ENCODE measurements at regions of chr5 and their contacts with region 1.

Region 1: GRCh38 chr5:68884883-68885282 is 208.9 kb upstream of the SLC30A5 start:
- DNase-seq: peak in 1 of 2 experiments; percentile 11
- H3K4me3 ChIP-seq: no peak overlapping the region
- H3K4me3 Mint-ChIP-seq: no peak overlapping the region
- H3K27ac Mint-ChIP-seq: no peak overlapping the region
- H3K4me1 ChIP-seq: no peaks in the 10 kb centered on the region
- H3K4me1 Mint-ChIP-seq: no peaks in the 10 kb centered on the region
- H3K27me3 ChIP-seq: no peaks in the 10 kb centered on the region
- H3K27me3 Mint-ChIP-seq: peaks cover 13% of the 10 kb centered on the region
- CTCF ChIP-seq: peak; percentile 42 to 51

Region 2: DNA sequence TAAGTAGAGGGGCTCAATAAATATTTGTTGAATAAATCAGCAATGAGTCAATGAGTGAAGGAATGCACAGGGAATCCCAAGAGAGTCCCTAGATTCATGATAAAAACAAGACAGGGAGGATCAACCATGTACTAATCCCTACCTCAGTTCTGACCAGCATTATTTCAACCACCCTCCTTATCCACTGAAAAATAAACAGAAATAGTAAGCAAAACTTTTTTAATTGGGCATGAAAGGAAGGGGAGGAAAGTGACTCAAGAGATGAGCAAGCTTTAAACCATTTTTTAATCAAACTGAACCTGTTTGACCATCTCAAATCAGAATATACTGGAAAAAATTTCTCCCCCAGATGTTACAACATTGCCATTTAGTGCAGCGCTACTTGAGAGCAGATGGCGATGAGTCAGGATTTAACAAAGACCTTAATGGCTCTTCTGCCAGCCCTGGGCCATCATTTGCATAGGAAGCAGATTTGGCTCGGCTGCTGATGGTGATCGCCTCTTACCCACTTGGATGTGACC is 14.1 kb after region 1 on chr5:
- CTCF ChIA-PET with region 1: no interaction called
- POLR2A ChIA-PET with region 1: no interaction called
- intact Hi-C with region 1: no loop called
- DNase-seq: no peak
- H3K4me3 ChIP-seq: no peak overlapping the region
- H3K4me3 Mint-ChIP-seq: no peak overlapping the region
- H3K27ac Mint-ChIP-seq: no peak overlapping the region
- H3K4me1 ChIP-seq: no peaks in the 10 kb centered on the region
- H3K4me1 Mint-ChIP-seq: no peaks in the 10 kb centered on the region
- H3K27me3 ChIP-seq: no peaks in the 10 kb centered on the region
- H3K27me3 Mint-ChIP-seq: no peaks in the 10 kb centered on the region
- CTCF ChIP-seq: no peak

Region 3: GRCh38 chr5:68911840-68912690 is 27.2 kb after region 1 on chr5:
- CTCF ChIA-PET with region 1: no interaction called
- POLR2A ChIA-PET with region 1: no interaction called
- intact Hi-C with region 1: loop called (anchors 1 kb)
- DNase-seq: no peak
- H3K4me3 ChIP-seq: no peak overlapping the region
- H3K4me3 Mint-ChIP-seq: no peak overlapping the region
- H3K27ac Mint-ChIP-seq: no peak overlapping the region
- H3K4me1 ChIP-seq: no peaks in the 10 kb centered on the region
- H3K4me1 Mint-ChIP-seq: no peaks in the 10 kb centered on the region
- H3K27me3 ChIP-seq: no peaks in the 10 kb centered on the region; the same call in 1 of the 2 replicates
- H3K27me3 Mint-ChIP-seq: no peaks in the 10 kb centered on the region
- CTCF ChIP-seq: no peak

Region 4: DNA sequence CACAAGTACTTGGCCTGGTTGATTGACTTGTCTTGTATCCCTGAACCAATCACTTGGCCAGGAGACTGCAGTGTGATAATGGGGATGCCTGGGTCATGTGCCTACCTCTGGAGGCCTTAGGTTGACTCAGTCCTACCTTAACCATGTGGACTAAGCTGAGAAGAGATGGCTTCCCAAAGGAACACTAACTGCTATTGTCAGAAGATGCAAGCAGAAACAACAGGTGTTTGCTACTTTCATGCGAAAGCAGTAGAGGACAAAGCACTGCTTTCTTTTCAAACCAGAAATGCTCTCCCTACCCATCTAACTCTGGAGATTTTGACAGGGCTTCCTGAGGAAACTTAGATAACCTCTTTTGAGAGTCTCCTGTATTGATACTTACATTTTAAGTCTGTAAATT is 372.7 kb after region 1 on chr5:
- CTCF ChIA-PET with region 1: no interaction called
- POLR2A ChIA-PET with region 1: no interaction called
- intact Hi-C with region 1: loop called (anchors 5 kb)
- DNase-seq: no peak
- H3K4me3 ChIP-seq: no peak overlapping the region
- H3K4me3 Mint-ChIP-seq: no peak overlapping the region
- H3K27ac Mint-ChIP-seq: no peak overlapping the region
- H3K4me1 ChIP-seq: no peaks in the 10 kb centered on the region
- H3K4me1 Mint-ChIP-seq: peaks cover 7% of the 10 kb centered on the region
- H3K27me3 ChIP-seq: no peaks in the 10 kb centered on the region
- H3K27me3 Mint-ChIP-seq: no peaks in the 10 kb centered on the region
- CTCF ChIP-seq: no peak